ENCODE measurements at regions of chr4 and their contacts with region 1.

Region 1: DNA sequence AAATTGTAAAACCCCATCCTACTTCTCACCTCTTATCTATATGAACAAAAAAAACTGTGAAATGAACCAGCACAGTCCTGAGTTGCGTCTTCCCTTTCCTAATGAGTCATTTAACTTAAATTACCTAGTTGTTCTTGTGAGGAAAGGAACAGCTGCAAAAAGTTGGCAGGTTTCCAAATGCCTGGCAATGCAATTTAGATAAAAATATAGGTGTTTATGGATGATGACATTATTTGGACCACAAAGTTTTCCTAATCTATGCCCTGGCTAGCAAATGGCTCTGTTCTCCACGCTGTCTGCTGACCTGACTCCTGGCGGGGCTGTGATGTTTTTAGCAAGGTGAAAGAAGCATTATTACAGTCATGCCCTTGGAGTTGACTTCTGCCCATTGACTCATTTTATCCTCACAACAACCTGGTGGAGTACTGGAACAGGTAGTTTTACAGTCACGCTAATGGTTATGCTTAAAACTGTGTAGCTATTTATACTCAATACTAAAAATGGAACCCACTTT is 29.8 kb upstream of the RELL1 start:
- DNase-seq: peak; percentile 80
- H3K4me3 Mint-ChIP-seq: no peak overlapping the region
- H3K27ac Mint-ChIP-seq: peak overlapping the region; percentile 77
- H3K4me1 Mint-ChIP-seq: peaks cover 17% of the 10 kb centered on the region
- H3K27me3 Mint-ChIP-seq: peaks cover 4% of the 10 kb centered on the region

Region 2: GRCh38 chr4:37765741-37766140 is 49.8 kb after region 1 on chr4:
- CTCF ChIA-PET with region 1: no interaction called
- intact Hi-C with region 1: loop called (anchors 1 kb)
- DNase-seq: no peak
- H3K4me3 Mint-ChIP-seq: no peak overlapping the region
- H3K27ac Mint-ChIP-seq: peak overlapping the region; percentile 51
- H3K4me1 Mint-ChIP-seq: peaks cover 7% of the 10 kb centered on the region
- H3K27me3 Mint-ChIP-seq: no peaks in the 10 kb centered on the region

Measured in activated naive CD4-positive, alpha-beta T cell treated with anti-CD3 and anti-CD28 coated beads for 36 hours (primary cell).